ENCODE measurements at regions of chr4 and their contacts with region 1.

Region 1: DNA sequence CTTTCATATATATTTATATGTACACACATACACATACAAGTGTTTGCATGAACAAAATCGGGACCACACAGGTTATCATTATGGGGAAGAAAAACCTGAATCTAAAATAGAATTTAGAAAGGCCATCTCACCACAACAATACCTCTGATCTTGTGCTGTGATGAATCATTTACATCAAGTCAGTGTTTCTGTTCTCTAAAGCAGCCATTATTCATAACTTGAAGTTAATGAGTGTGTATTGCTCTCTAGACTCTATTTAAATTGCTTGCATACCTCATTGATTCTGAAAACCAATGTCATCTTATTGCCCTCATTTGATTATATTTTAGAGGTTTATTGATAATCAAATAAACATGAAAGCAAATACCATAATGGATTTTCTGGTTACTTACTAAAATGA is 71.6 kb downstream of the FAM114A1 start:
- DNase-seq: no peak
- ATAC-seq: no peak

Region 2: DNA sequence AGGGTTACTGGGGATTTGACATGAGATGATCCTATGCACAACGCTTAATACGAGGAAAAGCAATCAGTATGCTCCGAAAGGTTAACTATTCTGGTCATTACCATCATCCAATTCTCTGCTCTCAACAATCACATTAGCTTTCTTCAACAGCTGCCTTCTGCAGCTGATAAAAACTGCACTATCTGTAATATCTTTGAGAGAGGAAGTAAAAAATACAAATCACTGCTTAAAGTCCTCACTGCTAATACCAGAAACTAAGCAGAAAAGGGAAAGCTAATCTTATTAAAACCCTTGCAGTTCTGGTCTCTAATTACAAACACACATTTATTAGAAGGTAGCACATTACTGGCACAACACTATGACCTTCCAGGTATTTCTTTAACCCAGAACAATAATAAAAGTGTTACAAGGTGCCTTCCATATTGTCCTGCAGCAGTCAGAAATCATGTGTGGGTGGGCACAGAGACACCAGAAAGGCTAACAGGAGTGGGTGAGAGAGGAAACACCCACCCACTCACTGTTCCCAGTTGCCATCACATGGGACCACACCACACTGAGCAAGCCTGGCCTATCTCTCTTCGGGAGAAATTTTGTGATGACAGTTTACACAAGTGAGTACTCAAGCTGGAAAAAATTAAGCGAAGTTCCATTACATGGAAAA is 1324.0 kb before region 1 on chr4:
- intact Hi-C with region 1: no loop called
- DNase-seq: no peak
- ATAC-seq: peak; percentile 51

Region 3: DNA sequence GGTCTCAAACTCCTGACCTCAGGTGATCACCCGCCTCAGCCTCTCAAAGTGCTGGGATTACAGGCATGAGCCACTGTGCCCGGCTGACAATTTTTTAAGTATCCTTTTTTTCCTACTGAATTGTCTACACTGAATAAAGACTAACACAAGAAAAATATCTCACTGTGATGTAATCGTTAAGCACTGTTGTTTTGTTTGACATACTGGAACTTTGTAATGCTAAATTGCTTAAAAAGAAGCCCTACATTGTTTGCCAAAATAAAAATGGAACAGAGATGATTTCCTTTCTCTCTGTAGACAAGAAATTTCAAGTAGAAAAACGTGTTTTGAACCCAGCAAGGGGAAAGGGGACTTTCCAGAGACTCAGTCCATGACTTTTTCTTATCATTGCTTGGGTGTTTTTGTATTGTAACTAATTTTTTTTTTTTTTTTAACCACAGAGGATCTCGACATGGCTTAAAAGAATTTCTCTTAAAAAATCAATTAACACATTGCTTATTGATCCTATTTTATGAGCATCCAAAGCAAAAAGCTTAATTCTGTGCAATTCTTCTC is 18.2 kb after region 1 on chr4:
- intact Hi-C with region 1: loop called (anchors 2 kb)
- DNase-seq: no peak
- ATAC-seq: peak; percentile 73

Region 4: GRCh38 chr4:38993694-38994093 is 54.5 kb after region 1 on chr4:
- intact Hi-C with region 1: no loop called
- DNase-seq: no peak
- ATAC-seq: no peak

Region 5: GRCh38 chr4:40672536-40673526 is 1733.7 kb after region 1 on chr4:
- intact Hi-C with region 1: no loop called
- DNase-seq: peak; percentile 60
- ATAC-seq: peak; percentile 65